ENCODE measurements at regions of chr20 and their contacts with region 1.

Region 1: GRCh38 chr20:40781327-40782042 is 92.4 kb upstream of the MAFB start:
- DNase-seq: peak; percentile 76 to 84 (median 79)
- H3K4me3 ChIP-seq: peak overlapping the region in 2 of 3 experiments; percentile 25 to 51
- H3K4me3 Mint-ChIP-seq: no peak overlapping the region
- H3K27ac ChIP-seq: peak overlapping the region; percentile 63 to 73
- H3K27ac Mint-ChIP-seq: no peak overlapping the region
- H3K4me1 ChIP-seq: peaks cover 91 to 97% of the 10 kb centered on the region in 2 donors
- H3K4me1 Mint-ChIP-seq: peaks cover 22% of the 10 kb centered on the region
- H3K27me3 ChIP-seq: no peaks in the 10 kb centered on the region
- H3K27me3 Mint-ChIP-seq: peaks cover 0 to 6% (median 0%) of the 10 kb centered on the region in 3 donors
- CTCF ChIP-seq: no peak

Region 2: DNA sequence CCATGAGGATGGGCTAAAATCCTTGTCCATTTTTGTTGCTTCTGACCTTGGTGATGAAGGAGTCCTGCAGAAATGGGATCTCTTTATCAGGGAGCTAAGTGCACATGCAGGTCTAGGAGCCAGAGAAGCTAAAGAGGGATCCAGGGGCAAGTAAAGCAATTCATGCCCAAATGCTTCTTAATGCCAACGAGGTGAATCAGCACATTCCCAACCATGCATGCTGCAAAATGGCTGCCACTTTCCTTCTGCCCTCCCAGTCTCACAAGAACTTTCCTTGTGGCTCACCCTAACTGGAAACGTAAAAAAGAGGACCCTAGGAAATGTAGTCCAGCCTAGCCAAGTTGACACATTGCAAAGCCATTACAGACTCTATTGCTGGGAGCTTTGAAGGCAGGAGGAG is 390.8 kb before region 1 on chr20:
- intact Hi-C with region 1: no loop called
- DNase-seq: no peak
- H3K4me3 ChIP-seq: no peak overlapping the region
- H3K4me3 Mint-ChIP-seq: no peak overlapping the region
- H3K27ac ChIP-seq: no peak overlapping the region
- H3K27ac Mint-ChIP-seq: no peak overlapping the region
- H3K4me1 ChIP-seq: peaks cover 15 to 21% of the 10 kb centered on the region in 2 donors
- H3K4me1 Mint-ChIP-seq: peaks cover 3% of the 10 kb centered on the region
- H3K27me3 ChIP-seq: peaks cover 3 to 7% of the 10 kb centered on the region in 2 donors
- H3K27me3 Mint-ChIP-seq: peaks cover 4 to 8% (median 4%) of the 10 kb centered on the region in 3 donors
- CTCF ChIP-seq: no peak

Region 3: GRCh38 chr20:40765814-40766480 is 15.5 kb before region 1 on chr20:
- intact Hi-C with region 1: loop called in 1 of 2 experiments (anchors 2 kb)
- DNase-seq: peak in 2 of 3 donors; percentile 47 to 70
- H3K4me3 ChIP-seq: no peak overlapping the region
- H3K4me3 Mint-ChIP-seq: no peak overlapping the region
- H3K27ac ChIP-seq: peak overlapping the region; percentile 13 to 54
- H3K27ac Mint-ChIP-seq: peak overlapping the region in 6 of 7 donors; percentile 22 to 85 (median 52)
- H3K4me1 ChIP-seq: peaks cover 61 to 63% of the 10 kb centered on the region in 2 donors
- H3K4me1 Mint-ChIP-seq: peaks cover 65% of the 10 kb centered on the region
- H3K27me3 ChIP-seq: no peaks in the 10 kb centered on the region
- H3K27me3 Mint-ChIP-seq: peaks cover 0 to 4% (median 2%) of the 10 kb centered on the region in 3 donors
- CTCF ChIP-seq: no peak